CD14-positive monocyte (primary cell): ENCODE measurements at regions of chr18 and their contacts with region 1.

Region 1: DNA sequence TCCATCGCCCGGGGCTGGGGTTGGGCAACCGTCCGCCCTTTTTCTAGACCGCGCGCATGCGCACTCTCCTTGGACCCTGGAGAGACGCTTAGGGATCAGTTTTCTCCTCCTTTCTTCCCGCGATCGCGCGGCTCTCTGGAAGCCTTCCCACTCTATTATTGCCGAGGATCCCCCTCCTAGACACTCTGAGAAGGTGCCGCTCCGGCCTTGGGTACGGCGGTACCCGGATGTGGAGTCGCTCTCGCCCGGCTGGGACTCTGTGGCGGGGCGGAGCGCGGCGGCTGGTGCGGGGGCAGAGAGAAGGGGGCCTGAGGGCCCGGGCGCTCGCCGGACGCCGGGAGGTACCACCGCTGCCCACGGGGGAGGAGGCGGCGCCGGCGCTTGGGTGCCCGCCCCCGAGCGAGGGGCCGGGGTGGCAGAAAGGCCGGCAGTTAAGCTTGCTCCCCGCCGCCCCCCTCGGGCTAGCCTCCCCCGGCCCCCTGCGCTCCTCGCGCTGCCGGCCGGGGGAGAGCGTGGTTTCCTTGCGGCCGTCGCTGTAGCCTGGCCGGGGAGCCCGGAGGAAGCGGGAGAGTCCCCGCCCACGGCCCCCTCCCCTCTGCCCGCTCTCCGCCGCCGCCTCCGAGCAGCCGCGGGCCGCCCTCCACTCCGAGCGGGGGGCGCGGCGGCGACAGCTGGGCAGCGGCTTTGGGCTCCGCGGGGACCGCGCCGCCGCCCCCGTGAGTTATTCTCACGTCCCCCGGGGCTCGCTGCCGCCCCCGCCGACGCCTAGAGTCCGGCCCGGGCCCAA is at the start of gene MIB1:
- DNase-seq: peak in 2 of 3 donors; percentile 38 to 57
- H3K4me3 ChIP-seq: peak within 1 kb of the TSS; percentile 87 to 92 (median 89)
- H3K4me3 Mint-ChIP-seq: peak within 1 kb of the TSS; percentile 95 to 97
- H3K27ac ChIP-seq: peak within 1 kb of the TSS; percentile 94 to 96
- H3K27ac Mint-ChIP-seq: peak within 1 kb of the TSS; percentile 94 to 99 (median 98)
- H3K4me1 ChIP-seq: peaks cover 16 to 32% of the 10 kb centered on the region in 2 donors
- H3K4me1 Mint-ChIP-seq: peaks cover 26% of the 10 kb centered on the region
- H3K27me3 ChIP-seq: no peaks in the 10 kb centered on the region
- H3K27me3 Mint-ChIP-seq: peaks cover 0 to 1% (median under 1%) of the 10 kb centered on the region in 3 donors
- CTCF ChIP-seq: no peak
- polyA plus RNA-seq, gene MIB1: 5.7 to 8.5 (median 7.8) TPM

Region 2: DNA sequence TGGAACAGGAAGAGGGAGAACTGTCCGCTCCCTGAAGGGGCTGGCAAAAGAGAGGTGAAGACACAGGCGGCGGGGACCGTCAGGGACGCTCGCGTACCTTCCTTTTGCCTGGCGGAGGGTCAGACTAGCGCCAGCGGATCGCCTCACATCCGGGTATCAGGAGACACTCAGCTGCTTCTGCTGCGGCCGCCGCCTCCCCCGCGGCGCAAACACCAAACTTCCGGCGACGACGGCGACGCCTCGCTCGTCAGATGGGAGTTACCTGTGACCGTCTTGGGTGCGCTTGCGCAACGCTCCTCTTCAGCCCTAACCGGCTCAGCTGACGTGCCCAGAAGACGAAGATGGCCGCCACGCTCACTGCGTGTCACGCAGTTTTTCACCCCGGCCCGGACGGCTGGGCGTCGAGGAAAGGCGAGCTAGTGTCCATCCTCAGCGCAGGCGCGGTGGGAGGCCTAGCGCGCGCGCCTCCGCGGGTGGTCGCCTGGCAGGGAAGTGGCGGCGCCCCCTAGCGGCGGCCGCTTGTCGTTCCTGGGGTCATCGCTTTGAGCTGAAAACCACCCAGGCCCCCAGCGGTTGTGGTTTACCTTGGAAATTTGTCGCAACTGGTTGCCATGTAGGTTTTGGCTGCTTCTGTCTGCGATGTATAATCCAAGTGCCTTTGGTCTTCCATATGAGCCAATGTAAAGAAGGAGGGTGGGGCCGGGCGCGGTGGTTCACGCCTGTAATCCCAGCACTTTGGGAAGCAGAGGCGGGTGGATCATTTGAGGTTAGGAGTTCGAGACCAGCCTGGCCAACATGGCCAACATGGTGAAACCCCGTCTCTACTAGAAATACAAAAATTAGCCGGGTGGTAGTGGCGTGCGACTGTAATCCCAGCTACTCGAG is 140.1 kb before region 1 on chr18 and contains the start of gene ESCO1:
- intact Hi-C with region 1: loop called in 1 of 2 experiments (anchors 5 kb)
- DNase-seq: peak; percentile 97 to 100 (median 100)
- H3K4me3 ChIP-seq: peak within 1 kb of the TSS; percentile 59 to 100 (median 92)
- H3K4me3 Mint-ChIP-seq: peak within 1 kb of the TSS; percentile 95 to 99
- H3K27ac ChIP-seq: peak within 1 kb of the TSS; percentile 100
- H3K27ac Mint-ChIP-seq: peak within 1 kb of the TSS; percentile 97 to 100 (median 99)
- H3K4me1 ChIP-seq: peaks cover 32 to 37% of the 10 kb centered on the region in 2 donors
- H3K4me1 Mint-ChIP-seq: peaks cover 38% of the 10 kb centered on the region
- H3K27me3 ChIP-seq: no peaks in the 10 kb centered on the region
- H3K27me3 Mint-ChIP-seq: peaks cover 0 to 8% (median 0%) of the 10 kb centered on the region in 3 donors
- CTCF ChIP-seq: peak; percentile 99
- polyA plus RNA-seq, gene ESCO1: 1.3 to 6.1 (median 2.5) TPM

Region 3: DNA sequence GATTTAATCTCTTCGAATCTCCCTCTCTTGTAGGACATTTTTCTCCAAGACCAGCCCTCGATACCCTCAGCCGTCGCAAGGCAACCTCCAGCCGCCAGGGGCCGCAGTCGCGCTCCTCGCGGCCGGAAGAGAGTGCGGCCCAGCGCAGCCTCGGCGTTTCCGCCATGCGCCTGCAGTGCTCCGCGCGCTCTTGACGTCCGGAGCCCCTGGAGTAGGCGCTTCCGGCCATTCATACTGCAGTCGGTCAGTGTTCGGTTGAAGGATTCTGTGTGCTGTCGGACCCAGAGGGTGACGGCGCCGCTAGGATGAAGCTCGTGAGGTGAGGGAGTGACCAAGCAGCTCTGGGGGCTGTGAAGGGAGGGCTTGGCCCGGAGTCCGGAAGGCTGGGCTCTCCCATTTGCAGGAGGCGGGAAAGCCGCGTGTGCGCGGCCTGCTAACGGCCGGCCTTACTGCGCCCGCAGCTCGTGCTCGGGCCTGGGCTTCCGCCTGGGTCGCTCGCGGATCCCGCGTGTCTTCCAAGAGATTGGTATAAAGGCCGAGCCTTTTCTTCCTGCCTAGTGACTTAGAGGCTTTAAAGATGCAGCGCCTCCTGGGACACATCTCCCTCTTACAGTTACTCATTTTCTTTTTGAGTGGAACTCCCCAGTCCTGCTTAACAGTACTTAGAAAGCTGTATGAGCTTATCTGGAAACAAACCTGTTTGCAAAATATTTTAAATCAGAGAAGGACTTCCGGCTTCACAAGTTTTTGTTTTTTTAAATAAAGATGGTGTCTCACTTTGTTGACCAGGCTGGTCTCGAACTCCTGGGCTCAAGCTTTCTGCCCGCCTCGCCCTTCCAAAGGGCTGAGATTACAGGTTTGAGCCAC is 128.6 kb before region 1 on chr18 and contains the start of gene SNRPD1:
- intact Hi-C with region 1: loop called in 1 of 2 experiments (anchors 5 kb)
- DNase-seq: peak; percentile 86 to 89 (median 87)
- H3K4me3 ChIP-seq: peak within 1 kb of the TSS; percentile 69 to 87 (median 86)
- H3K4me3 Mint-ChIP-seq: peak within 1 kb of the TSS; percentile 93 to 99
- H3K27ac ChIP-seq: peak within 1 kb of the TSS; percentile 86 to 93
- H3K27ac Mint-ChIP-seq: peak within 1 kb of the TSS; percentile 95 to 99 (median 98)
- H3K4me1 ChIP-seq: peaks cover 20 to 21% of the 10 kb centered on the region in 2 donors
- H3K4me1 Mint-ChIP-seq: peaks cover 23% of the 10 kb centered on the region
- H3K27me3 ChIP-seq: no peaks in the 10 kb centered on the region
- H3K27me3 Mint-ChIP-seq: peaks cover 0 to 1% (median 1%) of the 10 kb centered on the region in 3 donors
- CTCF ChIP-seq: peak; percentile 92
- polyA plus RNA-seq, gene SNRPD1: 13.0 to 56.7 (median 50.9) TPM

Region 4: GRCh38 chr18:21803495-21803894 is 62.6 kb after region 1 on chr18:
- intact Hi-C with region 1: no loop called
- DNase-seq: peak; percentile 23 to 52 (median 36)
- H3K4me3 ChIP-seq: peak overlapping the region; percentile 20 to 50 (median 36)
- H3K4me3 Mint-ChIP-seq: peak overlapping the region in 1 of 2 donors; percentile 68
- H3K27ac ChIP-seq: peak overlapping the region in 1 of 2 donors; percentile 80
- H3K27ac Mint-ChIP-seq: peak overlapping the region; percentile 63 to 81 (median 68)
- H3K4me1 ChIP-seq: peaks cover 19 to 20% of the 10 kb centered on the region in 2 donors
- H3K4me1 Mint-ChIP-seq: peaks cover 21% of the 10 kb centered on the region
- H3K27me3 ChIP-seq: no peaks in the 10 kb centered on the region
- H3K27me3 Mint-ChIP-seq: no peaks in the 10 kb centered on the region
- CTCF ChIP-seq: no peak